Heart left ventricle (tissue), 16 donors: ENCODE measurements at regions of chr7 and their contacts with region 1.

Region 1: GRCh38 chr7:87797798-87798403 is 78.3 kb downstream of the SLC25A40 start:
- DNase-seq: no peak
- ATAC-seq: peak in 2 of 4 donors; percentile 34 to 41
- H3K4me3 ChIP-seq: no peak overlapping the region
- H3K27ac ChIP-seq: no peak overlapping the region
- H3K4me1 ChIP-seq: no peaks in the 10 kb centered on the region
- H3K27me3 ChIP-seq: no peaks in the 10 kb centered on the region
- CTCF ChIP-seq: peak; percentile 37 to 70 (median 52)
- POLR2A ChIP-seq: no peak

Region 2: GRCh38 chr7:87702313-87702712 is 95.6 kb before region 1 on chr7:
- intact Hi-C with region 1: no loop called
- DNase-seq: no peak
- ATAC-seq: no peak
- H3K4me3 ChIP-seq: no peak overlapping the region
- H3K27ac ChIP-seq: no peak overlapping the region
- H3K4me1 ChIP-seq: no peaks in the 10 kb centered on the region
- H3K27me3 ChIP-seq: no peaks in the 10 kb centered on the region
- CTCF ChIP-seq: no peak
- POLR2A ChIP-seq: no peak

Region 3: DNA sequence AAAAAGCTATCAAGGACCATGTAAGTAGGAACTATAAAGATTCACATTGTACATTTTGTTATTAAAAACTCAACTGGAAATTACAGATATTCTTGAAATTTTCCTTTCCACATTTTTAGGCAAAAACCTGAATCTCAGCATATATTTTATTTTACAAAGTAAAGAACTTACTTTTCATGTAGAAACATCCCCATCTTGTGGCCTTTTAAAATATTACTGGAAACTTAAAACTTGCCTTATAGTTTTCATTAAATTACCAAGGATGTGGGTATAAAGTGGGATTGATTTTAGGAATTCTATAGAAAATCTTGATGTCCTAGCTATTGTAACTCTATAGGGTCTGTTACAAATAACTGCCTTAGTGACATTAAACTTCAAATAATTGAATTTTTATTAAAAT is 89.0 kb after region 1 on chr7:
- intact Hi-C with region 1: loop called in 7 of 10 experiments (anchors 2 to 5 kb)
- DNase-seq: no peak
- ATAC-seq: no peak
- H3K4me3 ChIP-seq: no peak overlapping the region
- H3K27ac ChIP-seq: no peak overlapping the region
- H3K4me1 ChIP-seq: no peaks in the 10 kb centered on the region
- H3K27me3 ChIP-seq: no peaks in the 10 kb centered on the region
- CTCF ChIP-seq: peak; percentile 23 to 65 (median 48)
- POLR2A ChIP-seq: no peak

Region 4: DNA sequence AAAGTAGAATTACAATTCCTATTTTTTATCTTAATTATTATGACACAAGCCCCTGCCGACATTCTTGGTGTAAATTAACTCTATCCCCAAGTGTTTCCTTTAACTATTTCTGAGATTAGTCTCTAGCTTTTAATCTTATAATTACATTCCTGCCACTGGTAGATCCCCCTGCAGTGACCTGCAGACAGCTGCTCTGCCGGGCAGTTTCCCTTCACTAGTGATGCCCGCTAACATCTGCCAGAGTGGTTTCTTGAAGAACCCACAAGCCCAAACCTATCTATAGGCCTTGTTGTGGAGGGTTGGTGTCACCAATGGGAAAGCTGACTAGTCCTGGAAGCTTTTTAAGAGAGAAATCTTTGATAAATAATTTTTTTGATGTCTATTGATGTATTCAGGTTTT is 186.2 kb after region 1 on chr7:
- intact Hi-C with region 1: no loop called
- DNase-seq: no peak
- ATAC-seq: no peak
- H3K4me3 ChIP-seq: no peak overlapping the region
- H3K27ac ChIP-seq: no peak overlapping the region
- H3K4me1 ChIP-seq: no peaks in the 10 kb centered on the region
- H3K27me3 ChIP-seq: no peaks in the 10 kb centered on the region
- CTCF ChIP-seq: no peak
- POLR2A ChIP-seq: no peak

Region 5: GRCh38 chr7:88111136-88111743 is 313.3 kb after region 1 on chr7:
- intact Hi-C with region 1: loop called in 9 of 10 experiments (anchors 5 to 10 kb)
- DNase-seq: no peak
- ATAC-seq: peak in 1 of 4 donors; percentile 53
- H3K4me3 ChIP-seq: no peak overlapping the region
- H3K27ac ChIP-seq: no peak overlapping the region
- H3K4me1 ChIP-seq: peaks cover 0 to 13% (median 2%) of the 10 kb centered on the region in 12 donors
- H3K27me3 ChIP-seq: no peaks in the 10 kb centered on the region
- CTCF ChIP-seq: peak; percentile 36 to 76 (median 62)
- POLR2A ChIP-seq: no peak

Region 6: GRCh38 chr7:88169717-88170320 is 371.9 kb after region 1 on chr7:
- intact Hi-C with region 1: loop called in 8 of 10 experiments (anchors 2 to 10 kb)
- DNase-seq: no peak
- ATAC-seq: no peak
- H3K4me3 ChIP-seq: no peak overlapping the region
- H3K27ac ChIP-seq: no peak overlapping the region
- H3K4me1 ChIP-seq: peaks cover 0 to 6% (median 0%) of the 10 kb centered on the region in 12 donors
- H3K27me3 ChIP-seq: no peaks in the 10 kb centered on the region
- CTCF ChIP-seq: peak; percentile 36 to 68 (median 52)
- POLR2A ChIP-seq: no peak